ENCODE measurements at regions of chr9 and their contacts with region 1.

Region 1: DNA sequence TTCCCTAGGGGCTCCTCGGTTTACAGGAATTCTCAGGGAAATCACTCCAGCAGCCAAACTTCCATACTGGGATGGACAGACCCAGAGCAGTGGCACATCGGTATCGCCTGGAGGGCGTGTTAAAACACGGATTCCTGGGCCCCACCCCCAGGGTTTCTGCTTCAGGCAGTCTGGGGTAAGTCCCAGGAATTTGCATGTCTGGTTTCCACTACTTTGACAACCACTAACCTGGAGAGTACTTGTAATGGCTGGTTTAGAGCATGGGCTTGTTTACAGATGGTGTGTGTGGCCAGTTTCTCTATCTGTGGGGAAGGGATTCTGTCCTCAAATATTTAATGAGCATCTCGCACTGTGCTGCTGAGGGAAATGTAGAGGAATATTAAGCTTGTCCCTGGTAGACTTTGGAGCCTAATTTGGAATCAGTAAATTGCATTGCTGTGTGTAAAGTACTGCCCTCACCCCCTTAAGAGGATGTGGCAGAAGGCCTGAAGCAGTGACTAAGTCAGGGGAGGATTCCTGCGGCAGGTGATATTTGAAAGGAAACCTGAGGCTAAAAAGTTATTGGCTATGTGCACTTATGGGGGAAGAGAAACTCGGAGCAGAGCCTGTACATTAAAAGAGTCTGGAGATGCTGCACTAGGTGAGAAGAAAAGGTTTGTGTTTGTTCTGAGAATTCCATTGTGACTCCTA is 18.6 kb upstream of the TJP2 start:
- DNase-seq: no peak

Region 2: GRCh38 chr9:69165581-69165980 is 10.1 kb after region 1 on chr9:
- intact Hi-C with region 1: loop called in 1 of 2 experiments (anchors 1 kb)
- DNase-seq: no peak

Region 3: GRCh38 chr9:71145179-71145578 is 1989.7 kb after region 1 on chr9:
- intact Hi-C with region 1: no loop called
- DNase-seq: no peak

Measured in posterior vena cava (tissue), 2 donors.